Caco-2 (cell line): ENCODE measurements at regions of chr15 and their contacts with region 1.

Region 1: GRCh38 chr15:51924156-51925068 is 47.2 kb downstream of the LEO1 start:
- DNase-seq: peak in 1 of 2 experiments; percentile 8
- H3K4me3 ChIP-seq: no peak overlapping the region
- H3K4me3 Mint-ChIP-seq: no peak overlapping the region
- H3K27ac Mint-ChIP-seq: no peak overlapping the region
- H3K4me1 ChIP-seq: no peaks in the 10 kb centered on the region
- H3K4me1 Mint-ChIP-seq: no peaks in the 10 kb centered on the region
- H3K27me3 ChIP-seq: no peaks in the 10 kb centered on the region
- H3K27me3 Mint-ChIP-seq: no peaks in the 10 kb centered on the region
- CTCF ChIP-seq: no peak

Region 2: GRCh38 chr15:51649659-51650521 is 274.5 kb before region 1 on chr15:
- CTCF ChIA-PET with region 1: no interaction called
- POLR2A ChIA-PET with region 1: no interaction called
- intact Hi-C with region 1: loop called (anchors 5 kb)
- DNase-seq: peak in 1 of 2 experiments; percentile 64
- H3K4me3 ChIP-seq: no peak overlapping the region
- H3K4me3 Mint-ChIP-seq: no peak overlapping the region
- H3K27ac Mint-ChIP-seq: no peak overlapping the region
- H3K4me1 ChIP-seq: no peaks in the 10 kb centered on the region
- H3K4me1 Mint-ChIP-seq: no peaks in the 10 kb centered on the region
- H3K27me3 ChIP-seq: no peaks in the 10 kb centered on the region
- H3K27me3 Mint-ChIP-seq: peaks cover 4% of the 10 kb centered on the region
- CTCF ChIP-seq: peak; percentile 52 to 70